AG04449 (cell line): ENCODE measurements at regions of chr6 and their contacts with region 1.

Region 1: DNA sequence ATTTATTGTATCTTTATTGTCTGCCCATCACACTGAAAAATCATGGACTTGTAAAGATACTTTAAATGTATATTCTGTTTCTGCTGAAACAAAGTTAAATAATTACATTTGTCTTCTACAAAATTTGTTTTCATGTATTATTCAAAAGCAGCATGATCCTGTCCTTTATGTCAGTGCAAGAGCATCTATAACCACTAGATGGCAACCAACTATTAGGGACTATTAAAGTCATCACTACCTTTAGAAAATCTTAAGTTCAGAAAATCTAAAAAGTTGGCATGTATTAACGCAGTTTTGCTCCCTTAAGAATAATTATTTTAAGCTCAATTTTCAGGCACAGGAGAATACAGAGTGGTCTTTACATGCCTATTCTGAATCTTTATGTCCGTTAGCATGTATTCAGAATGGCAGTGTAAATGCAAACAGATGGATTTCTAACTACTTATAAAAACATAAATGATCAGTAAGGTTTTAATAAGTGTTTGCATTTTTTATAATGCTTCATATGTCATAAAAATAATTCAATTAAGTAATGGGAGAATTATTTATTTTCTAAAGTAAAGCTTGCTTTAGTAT is 17.8 kb downstream of the TMEM30A start:
- DNase-seq: no peak
- H3K4me3 ChIP-seq: no peak overlapping the region
- CTCF ChIP-seq: peak; percentile 54

Region 2: GRCh38 chr6:75243333-75244062 is 23.3 kb before region 1 on chr6 and contains the start of gene COX7A2:
- CTCF ChIA-PET with region 1: interaction called, 14 read pairs
- POLR2A ChIA-PET with region 1: interaction called, 3 read pairs
- DNase-seq: peak; percentile 88
- H3K4me3 ChIP-seq: peak within 1 kb of the TSS; percentile 99
- CTCF ChIP-seq: no peak

Region 3: GRCh38 chr6:75284632-75285286 is 18.0 kb after region 1 on chr6 and contains the start of gene TMEM30A:
- CTCF ChIA-PET with region 1: interaction called, 47 read pairs
- POLR2A ChIA-PET with region 1: no interaction called
- DNase-seq: peak; percentile 95
- H3K4me3 ChIP-seq: peak within 1 kb of the TSS; percentile 84
- CTCF ChIP-seq: peak; percentile 17

Region 4: GRCh38 chr6:75306064-75306463 is 39.3 kb after region 1 on chr6:
- CTCF ChIA-PET with region 1: interaction called, 44 read pairs
- POLR2A ChIA-PET with region 1: no interaction called
- DNase-seq: no peak
- H3K4me3 ChIP-seq: no peak overlapping the region
- CTCF ChIP-seq: no peak

Region 5: DNA sequence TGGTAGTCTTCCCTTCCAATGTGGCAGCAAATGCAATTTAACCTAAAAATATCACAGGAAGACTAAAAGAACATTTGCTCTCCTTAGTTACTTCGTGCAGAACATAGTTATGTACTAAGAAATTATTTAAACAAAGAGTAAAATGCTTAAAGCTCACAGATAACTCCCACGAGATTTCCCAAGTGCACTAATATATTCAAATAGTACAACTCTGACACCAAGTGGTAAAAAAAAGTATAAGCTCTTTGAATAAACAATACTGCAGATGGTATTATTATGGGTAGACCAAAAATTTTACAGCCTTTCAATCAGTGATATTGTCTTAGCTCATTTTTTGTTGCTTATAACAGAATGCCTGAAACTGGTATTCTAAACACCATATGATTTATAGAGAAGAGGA is 279.6 kb after region 1 on chr6:
- CTCF ChIA-PET with region 1: interaction called, 57 read pairs
- POLR2A ChIA-PET with region 1: no interaction called
- DNase-seq: no peak
- H3K4me3 ChIP-seq: no peak overlapping the region
- CTCF ChIP-seq: no peak